GM10248 (cell line): ENCODE measurements at regions of chr3 and their contacts with region 1.

Region 1: GRCh38 chr3:189467451-189467850 is 163.7 kb upstream of the TP63 start:
- DNase-seq: no peak
- CTCF ChIP-seq: no peak

Region 2: GRCh38 chr3:189119950-189120349 is 347.5 kb before region 1 on chr3:
- CTCF ChIA-PET with region 1: no interaction called
- POLR2A ChIA-PET with region 1: no interaction called
- DNase-seq: no peak
- CTCF ChIP-seq: no peak

Region 3: GRCh38 chr3:189457201-189457607 is 10.2 kb before region 1 on chr3:
- CTCF ChIA-PET with region 1: interaction called, 15 read pairs
- POLR2A ChIA-PET with region 1: no interaction called
- DNase-seq: no peak
- CTCF ChIP-seq: no peak

Region 4: DNA sequence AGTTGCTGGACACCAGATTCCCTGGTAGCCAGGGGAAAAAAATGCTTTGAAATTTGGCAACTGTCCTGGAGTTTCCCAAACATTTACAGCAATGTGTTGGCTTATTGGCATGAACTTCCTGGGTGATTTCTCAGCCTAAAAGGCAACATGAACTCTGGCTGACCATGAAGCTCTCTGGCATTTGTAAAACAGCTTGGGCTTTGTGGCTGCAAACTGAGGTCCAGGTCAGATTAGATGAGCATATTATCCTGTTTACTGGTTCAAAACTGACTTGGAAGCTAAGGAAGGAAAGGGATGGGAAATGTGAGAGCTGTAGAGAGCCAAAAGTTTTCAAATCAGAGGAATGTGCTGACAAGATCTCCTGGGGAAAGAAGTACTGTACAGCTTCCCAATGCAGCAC is 514.2 kb after region 1 on chr3:
- CTCF ChIA-PET with region 1: no interaction called
- POLR2A ChIA-PET with region 1: no interaction called
- DNase-seq: no peak
- CTCF ChIP-seq: no peak